Activated naive CD4-positive, alpha-beta T cell treated with anti-CD3 and anti-CD28 coated beads, Interleukin-2, amount 10 ng/mL, durations not matched to agents 7 days and 5 days (primary cell): ENCODE measurements at regions of chr12 and their contacts with region 1.

Region 1: GRCh38 chr12:12334367-12335040 is 15.5 kb downstream of the MANSC1 start:
- DNase-seq: peak; percentile 70
- H3K4me3 Mint-ChIP-seq: no peak overlapping the region
- H3K27ac Mint-ChIP-seq: no peak overlapping the region
- H3K4me1 Mint-ChIP-seq: peaks cover 31% of the 10 kb centered on the region
- H3K27me3 Mint-ChIP-seq: peaks cover 21% of the 10 kb centered on the region

Region 2: DNA sequence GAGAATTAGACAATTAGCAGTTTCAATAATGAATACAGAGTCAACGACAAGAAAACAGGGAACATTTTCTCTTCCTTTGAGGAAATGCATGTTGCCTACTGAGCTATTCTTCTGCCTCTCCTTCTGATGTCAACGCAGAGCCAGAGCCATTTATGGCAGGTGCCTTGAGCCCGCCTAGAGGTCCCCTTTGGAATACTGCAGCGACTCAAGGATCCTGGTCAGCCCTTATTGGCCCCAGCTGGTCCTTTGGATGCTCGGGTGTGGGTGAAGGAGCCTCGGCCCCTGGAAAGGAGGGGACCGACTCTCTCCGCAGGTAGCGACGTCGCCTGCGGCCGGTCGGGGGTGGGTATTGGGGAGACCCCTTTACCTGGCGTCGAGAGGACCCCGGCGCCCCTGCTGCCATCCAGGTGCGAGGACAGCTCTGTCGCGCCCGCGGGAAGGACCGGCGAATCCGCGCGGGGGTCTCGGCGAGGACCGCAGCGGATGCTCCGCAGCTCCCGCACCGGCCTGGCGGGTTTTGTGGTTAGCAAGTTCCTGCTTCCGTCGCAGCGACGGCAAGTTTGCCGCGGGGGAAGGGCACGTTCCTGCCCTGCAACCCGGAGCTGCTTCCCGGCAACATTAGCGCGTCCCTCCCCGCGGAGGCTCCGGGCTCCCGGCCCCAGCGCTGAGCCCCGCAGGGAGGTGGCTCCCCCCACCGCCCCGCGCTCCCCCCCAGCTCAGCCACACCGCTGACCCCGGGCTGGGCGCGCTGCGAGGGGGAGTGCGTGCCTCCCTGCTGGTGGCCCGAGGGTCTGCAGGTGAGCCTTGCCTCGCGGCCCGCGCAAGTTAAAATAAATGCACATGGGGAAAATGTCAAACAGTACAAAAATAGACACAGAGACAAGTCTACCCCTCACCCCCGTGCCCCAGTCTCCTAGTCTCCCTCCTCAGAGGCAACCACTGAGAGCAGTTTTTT is 15.5 kb after region 1 on chr12 and contains the start of gene MANSC1:
- CTCF ChIA-PET with region 1: interaction called, 18 read pairs
- DNase-seq: peak; percentile 73
- H3K4me3 Mint-ChIP-seq: peak within 1 kb of the TSS; percentile 69
- H3K27ac Mint-ChIP-seq: peak within 1 kb of the TSS; percentile 59
- H3K4me1 Mint-ChIP-seq: peaks cover 37% of the 10 kb centered on the region
- H3K27me3 Mint-ChIP-seq: no peaks in the 10 kb centered on the region

Region 3: DNA sequence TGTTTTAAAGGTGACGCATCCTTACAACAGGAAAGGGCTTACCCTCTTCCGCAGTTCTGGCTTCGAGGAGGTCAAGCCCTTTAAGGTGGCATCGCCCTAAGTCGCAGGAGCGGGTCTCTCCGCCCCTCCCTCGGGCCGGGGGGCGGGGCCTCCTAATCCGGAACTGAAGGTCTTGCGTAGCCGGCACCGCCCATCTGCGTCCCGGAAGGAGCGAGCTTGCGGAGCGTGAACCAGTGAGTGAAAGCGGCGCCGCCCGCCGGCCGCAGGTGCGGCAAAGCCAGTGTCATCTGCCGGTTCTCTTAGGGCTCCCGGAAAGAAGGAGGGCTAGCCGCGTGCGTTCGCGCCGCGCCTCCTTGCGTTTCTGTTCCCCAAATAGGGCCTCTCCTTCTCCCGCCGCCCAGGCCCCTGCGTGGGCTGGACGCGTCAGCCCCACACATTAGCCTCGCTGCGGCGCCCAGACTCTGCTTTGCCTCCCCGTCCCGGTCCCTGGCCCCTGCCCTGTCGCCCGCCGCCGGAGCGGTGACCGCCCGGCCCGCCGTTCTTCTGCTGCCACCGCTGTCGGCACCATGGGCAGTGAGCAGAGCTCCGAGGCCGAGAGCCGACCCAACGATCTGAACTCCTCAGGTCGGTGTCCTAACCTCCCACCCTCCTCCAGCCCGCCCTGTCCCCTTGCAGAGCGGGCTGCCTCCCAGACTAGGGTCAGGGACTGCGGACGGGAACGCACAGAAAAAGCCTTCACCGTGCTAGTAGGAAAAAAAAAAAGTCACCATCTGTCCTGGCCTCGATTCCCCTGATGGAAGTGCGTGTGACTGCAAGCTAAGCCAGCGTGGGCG is 22.6 kb after region 1 on chr12 and contains the start of gene BORCS5:
- CTCF ChIA-PET with region 1: interaction called, 23 read pairs
- DNase-seq: peak; percentile 99
- H3K4me3 Mint-ChIP-seq: peak within 1 kb of the TSS; percentile 90
- H3K27ac Mint-ChIP-seq: peak within 1 kb of the TSS; percentile 97
- H3K4me1 Mint-ChIP-seq: peaks cover 60% of the 10 kb centered on the region
- H3K27me3 Mint-ChIP-seq: no peaks in the 10 kb centered on the region